H1 (cell line): ENCODE measurements at regions of chr16 and their contacts with region 1.

Region 1: GRCh38 chr16:29745853-29746345 is at the start of gene C16orf54:
- DNase-seq: peak in 1 of 2 experiments; percentile 65
- H3K4me3 ChIP-seq: no peak within 1 kb of the TSS
- H3K27ac ChIP-seq: no peak within 1 kb of the TSS
- H3K4me1 ChIP-seq: peaks cover 0 to 4% (median 2%) of the 10 kb centered on the region in 4 experiments; a peak in 4 of 7 replicates
- H3K27me3 ChIP-seq: no peaks in the 10 kb centered on the region
- CTCF ChIP-seq: no peak
- EP300 ChIP-seq: no peak
- POLR2A ChIP-seq: no peak
- RAD21 ChIP-seq: no peak
- total RNA-seq, gene C16orf54: not detected in 2 replicates

Region 2: DNA sequence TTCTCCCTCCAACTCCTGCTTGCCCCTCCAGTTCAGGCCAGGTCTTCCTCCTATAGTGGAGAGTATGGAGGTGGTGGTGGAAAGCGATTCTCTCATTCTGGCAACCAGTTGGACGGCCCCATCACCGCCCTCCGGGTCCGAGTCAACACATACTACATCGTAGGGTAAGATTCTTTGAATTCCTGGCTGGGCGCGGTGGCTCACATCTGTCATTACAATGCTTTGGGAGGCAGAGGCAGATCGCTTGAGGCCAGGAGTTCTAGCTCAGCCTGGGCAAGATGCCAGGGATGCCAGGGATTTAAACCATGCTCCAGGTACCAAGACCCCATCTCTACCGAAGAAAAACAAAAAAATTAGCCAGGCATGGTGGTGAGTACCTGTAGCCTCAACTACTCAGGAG is 33.6 kb after region 1 on chr16:
- CTCF ChIA-PET with region 1: interaction called, 5 read pairs
- POLR2A ChIA-PET with region 1: interaction called, 16 read pairs
- DNase-seq: no peak
- H3K4me3 ChIP-seq: no peak overlapping the region
- H3K27ac ChIP-seq: no peak overlapping the region
- H3K4me1 ChIP-seq: no peaks in the 10 kb centered on the region
- H3K27me3 ChIP-seq: peaks cover 0 to 2% (median 0%) of the 10 kb centered on the region in 4 experiments; a peak in 2 of 7 replicates
- CTCF ChIP-seq: no peak
- EP300 ChIP-seq: no peak
- POLR2A ChIP-seq: no peak
- RAD21 ChIP-seq: no peak